ENCODE measurements at regions of chr6 and their contacts with region 1.

Region 1: GRCh38 chr6:26103770-26104456 is 16.7 kb downstream of the HFE start:
- DNase-seq: peak; percentile 97
- H3K4me3 Mint-ChIP-seq: peak overlapping the region; percentile 85
- H3K27ac Mint-ChIP-seq: peak overlapping the region; percentile 94
- H3K4me1 Mint-ChIP-seq: peaks cover 19% of the 10 kb centered on the region
- H3K27me3 Mint-ChIP-seq: peaks cover 5% of the 10 kb centered on the region

Region 2: GRCh38 chr6:26054857-26055669 is 48.9 kb before region 1 on chr6:
- intact Hi-C with region 1: loop called (anchors 1 kb)
- DNase-seq: peak; percentile 96
- H3K4me3 Mint-ChIP-seq: peak overlapping the region; percentile 94
- H3K27ac Mint-ChIP-seq: peak overlapping the region; percentile 99
- H3K4me1 Mint-ChIP-seq: peaks cover 30% of the 10 kb centered on the region
- H3K27me3 Mint-ChIP-seq: peaks cover 2% of the 10 kb centered on the region

Region 3: GRCh38 chr6:26087284-26088115 is 16.4 kb before region 1 on chr6 and contains the start of gene HFE:
- intact Hi-C with region 1: loop called (anchors 2 kb)
- DNase-seq: peak; percentile 83
- H3K4me3 Mint-ChIP-seq: peak within 1 kb of the TSS; percentile 83
- H3K27ac Mint-ChIP-seq: peak within 1 kb of the TSS; percentile 70
- H3K4me1 Mint-ChIP-seq: peaks cover 41% of the 10 kb centered on the region
- H3K27me3 Mint-ChIP-seq: peaks cover 1% of the 10 kb centered on the region
- total RNA-seq, gene HFE: 0.12 and 0.50 TPM in 2 replicates